ENCODE measurements at regions of chr7 and their contacts with region 1.

Region 1: DNA sequence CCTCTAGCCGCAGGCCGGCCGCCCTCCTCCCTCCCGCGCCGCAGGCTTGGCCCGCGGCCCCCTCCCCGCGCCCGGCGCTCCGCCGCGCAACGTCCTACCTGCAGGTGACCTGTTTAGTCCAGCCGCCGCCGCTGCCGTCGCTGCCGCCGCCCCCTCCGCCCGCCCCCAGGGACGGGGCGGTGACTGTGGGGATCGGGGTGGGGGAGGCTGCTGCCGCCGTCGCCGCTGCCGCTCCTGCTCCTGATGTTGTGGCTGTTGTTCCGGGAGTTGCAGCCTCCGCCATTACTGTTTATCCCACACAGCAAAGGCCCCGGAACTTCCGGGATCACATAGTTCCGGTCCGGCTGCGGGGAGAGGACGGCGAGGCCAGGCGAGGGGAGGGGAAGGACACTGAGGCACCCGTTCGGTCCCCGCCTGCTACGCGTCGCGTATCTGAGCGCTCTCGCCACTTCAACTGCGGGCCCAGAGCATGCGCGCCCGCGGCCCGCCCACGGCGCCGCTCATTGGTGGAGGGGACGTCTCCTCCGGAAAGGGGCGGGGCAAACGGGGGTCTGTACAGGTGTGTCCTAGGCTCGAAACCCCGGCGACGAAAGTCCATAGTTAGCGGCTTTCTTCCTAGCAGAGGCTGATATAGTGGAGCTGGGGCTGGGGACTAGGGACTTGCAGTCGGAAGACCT is at the start of gene MKRN1:
- DNase-seq: peak; percentile 94 to 96
- ATAC-seq: peak; percentile 99
- H3K4me3 ChIP-seq: peak within 1 kb of the TSS; percentile 96
- H3K27ac ChIP-seq: peak within 1 kb of the TSS; percentile 82
- H3K4me1 ChIP-seq: peaks cover 14% of the 10 kb centered on the region
- H3K27me3 ChIP-seq: no peaks in the 10 kb centered on the region
- CTCF ChIP-seq: no peak
- total RNA-seq, gene MKRN1: 58.3 to 82.0 (median 69.3) TPM

Region 2: GRCh38 chr7:140417456-140418155 is 61.6 kb before region 1 on chr7:
- intact Hi-C with region 1: no loop called
- DNase-seq: no peak
- ATAC-seq: no peak
- H3K4me3 ChIP-seq: no peak overlapping the region
- H3K27ac ChIP-seq: no peak overlapping the region
- H3K4me1 ChIP-seq: no peaks in the 10 kb centered on the region
- H3K27me3 ChIP-seq: no peaks in the 10 kb centered on the region
- CTCF ChIP-seq: no peak

Region 3: GRCh38 chr7:140517546-140518369 is 38.6 kb after region 1 on chr7:
- intact Hi-C with region 1: loop called in 1 of 2 experiments (anchors 5 kb)
- DNase-seq: peak; percentile 89 to 93
- ATAC-seq: peak; percentile 94 to 97 (median 96)
- H3K4me3 ChIP-seq: no peak overlapping the region
- H3K27ac ChIP-seq: peak overlapping the region; percentile 36
- H3K4me1 ChIP-seq: no peaks in the 10 kb centered on the region
- H3K27me3 ChIP-seq: no peaks in the 10 kb centered on the region
- CTCF ChIP-seq: peak; percentile 89

Measured in psoas muscle (tissue), 8 donors.